ENCODE measurements at regions of chr5 and their contacts with region 1.

Region 1: GRCh38 chr5:32585446-32586275 is at the start of gene SUB1:
- DNase-seq: peak; percentile 85 to 95
- H3K4me3 ChIP-seq: peak within 1 kb of the TSS; percentile 78 to 90
- H3K27ac ChIP-seq: peak within 1 kb of the TSS; percentile 98 to 99
- H3K4me1 ChIP-seq: peaks cover 0 to 32% (median 15%) of the 10 kb centered on the region in 4 donors
- H3K27me3 ChIP-seq: no peaks in the 10 kb centered on the region
- CTCF ChIP-seq: no peak

Region 2: DNA sequence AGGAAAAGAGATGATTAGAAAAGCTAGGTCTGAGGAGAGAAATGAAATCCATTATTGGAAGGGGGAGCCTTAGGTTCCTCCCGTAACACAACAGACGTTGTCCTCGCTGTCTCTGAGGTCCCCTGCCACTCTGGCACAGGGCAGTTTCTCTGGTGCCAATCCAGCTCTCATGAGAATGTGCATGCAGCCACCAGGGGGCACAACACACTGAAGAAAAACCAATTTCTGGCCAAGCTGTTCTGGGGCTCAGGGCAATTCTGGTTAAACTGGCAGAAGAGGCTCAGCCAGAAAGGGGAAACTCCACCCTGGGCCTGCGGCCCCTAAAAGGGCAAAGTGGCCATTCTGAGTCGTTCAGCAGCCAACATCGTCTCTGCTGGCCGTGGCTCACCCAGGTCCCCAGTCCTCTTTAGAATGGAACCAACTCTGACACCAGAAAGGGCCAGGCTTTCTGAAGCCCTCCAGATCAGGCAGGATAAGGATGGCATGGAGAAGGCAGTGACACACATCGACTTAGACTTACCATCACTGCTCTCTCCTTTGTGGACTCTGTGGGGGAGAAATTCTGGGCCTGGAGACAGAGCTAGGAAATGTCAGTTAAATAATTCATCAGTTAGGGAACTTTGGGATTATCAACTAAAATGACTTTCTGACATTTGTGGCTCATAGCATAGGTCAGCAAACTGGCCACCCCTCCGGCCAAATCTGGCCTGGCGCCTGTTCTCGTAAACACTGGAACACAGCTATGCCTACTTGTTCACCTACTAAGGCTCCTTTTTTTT is 353.0 kb before region 1 on chr5:
- intact Hi-C with region 1: loop called (anchors 10 kb)
- DNase-seq: peak; percentile 75 to 85
- H3K4me3 ChIP-seq: no peak overlapping the region
- H3K27ac ChIP-seq: peak overlapping the region; percentile 41 to 58
- H3K4me1 ChIP-seq: peaks cover 0 to 30% (median 24%) of the 10 kb centered on the region in 4 donors
- H3K27me3 ChIP-seq: no peaks in the 10 kb centered on the region
- CTCF ChIP-seq: peak; percentile 76 to 77

Region 3: DNA sequence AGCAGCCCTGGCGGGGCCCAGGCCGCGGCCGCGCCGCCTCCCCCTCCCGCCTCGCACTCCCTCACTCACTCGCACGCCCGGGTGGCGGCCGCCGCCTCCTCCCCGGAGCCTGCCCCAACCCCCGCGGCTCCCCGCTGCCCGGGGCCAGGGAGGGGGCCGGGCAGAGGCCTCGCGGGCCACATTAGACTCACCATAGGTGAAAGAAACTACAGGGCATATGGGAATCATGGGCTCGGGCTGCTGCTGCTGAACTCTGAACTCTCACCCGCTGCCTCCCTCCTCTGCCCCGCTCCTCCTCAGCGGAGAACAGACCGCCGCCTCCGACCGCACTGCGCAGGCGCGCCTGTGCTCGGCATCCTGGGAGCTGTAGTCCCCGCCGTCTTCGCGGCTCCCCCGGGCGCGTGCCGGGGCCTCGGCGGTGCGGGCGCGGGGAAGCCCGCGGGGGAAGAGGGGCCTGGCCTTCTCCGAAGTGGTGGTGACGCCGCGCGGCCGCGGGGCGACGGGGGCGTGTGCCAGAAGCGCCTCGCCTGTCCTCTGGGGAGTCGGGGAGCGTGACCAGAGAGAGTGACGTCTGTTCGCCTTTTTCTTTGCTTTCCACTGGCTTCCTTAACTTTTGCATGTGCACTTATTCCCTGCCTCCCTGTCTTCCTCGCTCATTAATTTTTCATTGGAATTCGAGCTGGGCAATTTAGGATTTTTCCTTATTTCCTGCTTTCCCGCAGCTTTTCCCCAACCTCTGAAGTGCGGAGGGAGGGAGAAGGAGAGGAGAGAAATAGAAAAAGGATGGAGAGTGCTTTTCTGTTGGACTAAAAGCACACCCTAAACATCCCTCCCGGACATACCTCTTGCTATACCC is 141.0 kb before region 1 on chr5 and contains the start of gene ZFR:
- intact Hi-C with region 1: loop called (anchors 5 kb)
- DNase-seq: peak; percentile 91 to 95
- H3K4me3 ChIP-seq: peak within 1 kb of the TSS; percentile 97 to 100
- H3K27ac ChIP-seq: peak within 1 kb of the TSS; percentile 98 to 99
- H3K4me1 ChIP-seq: peaks cover 0 to 39% (median 20%) of the 10 kb centered on the region in 4 donors
- H3K27me3 ChIP-seq: no peaks in the 10 kb centered on the region
- CTCF ChIP-seq: no peak

Region 4: DNA sequence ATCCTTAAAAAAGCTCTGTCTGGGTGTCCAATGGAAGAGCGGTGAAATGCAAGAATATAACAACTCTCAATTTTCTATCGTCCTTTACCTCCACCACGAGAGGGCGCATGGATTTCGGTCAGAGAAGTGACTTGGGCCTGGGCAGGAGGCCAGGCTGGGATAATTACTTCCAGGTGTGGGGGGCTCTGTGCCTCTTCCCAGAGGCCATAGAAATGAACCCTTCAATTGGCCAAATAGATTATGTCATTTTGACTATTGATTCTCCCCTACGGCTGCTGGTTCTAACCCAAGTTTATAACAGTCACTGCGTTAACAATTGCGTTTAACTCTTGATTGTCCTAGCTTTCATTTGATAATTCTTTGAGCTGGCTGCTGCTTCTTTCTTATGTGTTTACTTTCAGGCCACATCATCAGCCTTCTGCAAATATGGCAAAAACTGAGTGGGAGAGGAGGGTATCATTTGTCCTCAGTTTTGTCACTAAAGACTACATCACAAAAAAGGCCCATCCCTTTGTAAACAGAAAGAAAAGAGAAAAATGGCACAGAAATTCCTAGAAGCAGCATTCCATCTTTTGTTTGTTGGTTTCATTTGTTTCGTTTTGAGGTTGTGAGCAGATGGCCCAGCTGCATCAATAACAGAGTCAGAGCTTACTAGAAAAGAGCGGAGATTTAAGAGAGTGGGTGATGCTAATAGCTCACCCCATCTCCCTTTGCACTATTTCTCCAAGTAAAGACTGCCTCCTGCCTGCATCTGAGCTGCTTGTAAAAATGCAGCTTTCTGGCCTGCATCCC is 95.7 kb before region 1 on chr5:
- intact Hi-C with region 1: loop called (anchors 1 kb)
- DNase-seq: peak; percentile 75 to 81
- H3K4me3 ChIP-seq: no peak overlapping the region
- H3K27ac ChIP-seq: no peak overlapping the region
- H3K4me1 ChIP-seq: peaks cover 0 to 6% (median 2%) of the 10 kb centered on the region in 4 donors
- H3K27me3 ChIP-seq: no peaks in the 10 kb centered on the region
- CTCF ChIP-seq: peak; percentile 77 to 81

Measured in tibial artery (tissue), 4 donors.